Colonic mucosa (tissue), 4 donors: ENCODE measurements at regions of chr2 and their contacts with region 1.

Region 1: DNA sequence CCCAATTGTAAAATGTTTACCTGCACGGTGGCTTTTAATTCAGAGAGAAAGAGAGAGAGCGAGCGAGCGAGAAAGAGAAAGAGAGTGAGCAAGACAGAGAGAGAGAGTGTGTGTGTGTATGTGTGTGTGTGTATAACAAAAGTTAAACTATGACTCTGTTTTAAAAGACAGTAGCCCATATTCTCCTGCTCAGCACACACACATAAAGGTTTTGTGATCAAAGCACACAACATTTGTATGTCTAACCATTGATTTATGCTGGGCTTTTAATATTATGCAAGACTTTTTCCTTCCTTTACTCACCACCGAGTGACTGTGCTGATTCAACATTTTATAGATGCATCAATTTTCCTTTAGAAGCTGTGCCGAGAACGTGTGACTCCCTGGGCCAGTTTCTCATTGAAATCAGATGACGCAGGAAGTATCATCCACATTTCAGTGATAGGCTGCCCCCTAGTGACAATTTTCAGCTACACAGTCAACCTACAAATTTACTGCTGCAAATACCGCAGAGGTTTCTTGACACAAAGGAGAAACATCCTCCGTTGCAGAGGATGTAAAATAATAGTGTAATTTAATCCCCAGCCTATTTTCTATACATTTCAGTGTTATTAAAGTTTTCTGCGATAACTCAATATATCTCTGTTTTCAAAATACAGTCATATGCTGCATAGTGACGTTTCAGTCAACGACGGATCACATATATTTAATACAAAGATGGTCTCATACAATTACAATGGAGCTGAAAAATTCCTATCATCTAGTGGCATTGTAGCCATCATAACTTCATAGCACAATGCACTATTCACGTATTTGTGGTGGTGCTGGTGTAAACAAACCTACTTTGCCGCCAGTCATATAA is 165.9 kb upstream of the TANK start:
- DNase-seq: peak; percentile 81
- H3K4me3 ChIP-seq: no peak overlapping the region
- H3K27ac ChIP-seq: no peak overlapping the region
- H3K4me1 ChIP-seq: no peaks in the 10 kb centered on the region
- H3K27me3 ChIP-seq: no peaks in the 10 kb centered on the region
- CTCF ChIP-seq: peak; percentile 85

Region 2: GRCh38 chr2:160109936-160110673 is 884.3 kb before region 1 on chr2:
- intact Hi-C with region 1: loop called (anchors 5 kb)
- DNase-seq: peak; percentile 75
- H3K4me3 ChIP-seq: no peak overlapping the region
- H3K27ac ChIP-seq: no peak overlapping the region
- H3K4me1 ChIP-seq: no peaks in the 10 kb centered on the region
- H3K27me3 ChIP-seq: no peaks in the 10 kb centered on the region
- CTCF ChIP-seq: peak; percentile 70

Region 3: DNA sequence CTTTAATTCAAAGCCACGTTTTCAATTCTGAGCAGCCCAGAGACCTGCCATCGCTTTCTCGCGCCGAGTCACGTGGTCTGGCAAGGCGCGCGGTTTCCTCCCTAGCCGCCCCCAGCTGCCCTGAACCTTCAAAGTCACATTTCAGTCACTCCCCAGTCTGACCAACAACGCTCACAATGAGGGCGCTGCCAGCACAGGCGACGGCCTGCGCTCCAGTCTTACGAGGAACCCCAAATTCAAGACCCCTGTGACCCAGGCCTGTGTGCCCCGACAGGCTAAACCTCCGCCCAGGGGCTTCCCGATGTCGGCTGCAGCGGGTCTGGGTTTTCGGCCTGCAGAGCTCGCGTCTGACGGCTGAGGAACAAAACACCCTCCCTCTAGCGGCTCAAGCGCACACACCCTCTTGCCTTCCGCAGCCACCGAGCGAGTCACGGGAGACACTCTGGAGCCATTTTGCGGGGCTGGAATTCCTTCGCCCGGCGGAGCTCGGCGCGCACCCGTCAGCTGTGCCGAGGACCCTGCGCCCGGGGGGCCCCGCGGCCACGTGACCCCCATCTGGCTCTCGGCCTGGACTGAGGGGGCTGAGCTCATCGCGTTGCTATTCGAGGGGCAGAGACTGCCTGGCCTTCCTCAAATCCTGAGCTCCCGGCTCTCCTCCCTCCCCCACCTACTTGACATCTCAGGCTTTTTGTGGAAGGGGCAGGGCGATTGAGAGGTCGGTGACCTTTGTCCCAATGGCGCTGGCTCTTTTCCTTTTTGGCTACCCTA is 724.4 kb before region 1 on chr2:
- intact Hi-C with region 1: loop called (anchors 10 kb)
- DNase-seq: peak; percentile 79
- H3K4me3 ChIP-seq: peak overlapping the region; percentile 40
- H3K27ac ChIP-seq: peak overlapping the region; percentile 77
- H3K4me1 ChIP-seq: peaks cover 4% of the 10 kb centered on the region
- H3K27me3 ChIP-seq: no peaks in the 10 kb centered on the region
- CTCF ChIP-seq: peak; percentile 55

Region 4: DNA sequence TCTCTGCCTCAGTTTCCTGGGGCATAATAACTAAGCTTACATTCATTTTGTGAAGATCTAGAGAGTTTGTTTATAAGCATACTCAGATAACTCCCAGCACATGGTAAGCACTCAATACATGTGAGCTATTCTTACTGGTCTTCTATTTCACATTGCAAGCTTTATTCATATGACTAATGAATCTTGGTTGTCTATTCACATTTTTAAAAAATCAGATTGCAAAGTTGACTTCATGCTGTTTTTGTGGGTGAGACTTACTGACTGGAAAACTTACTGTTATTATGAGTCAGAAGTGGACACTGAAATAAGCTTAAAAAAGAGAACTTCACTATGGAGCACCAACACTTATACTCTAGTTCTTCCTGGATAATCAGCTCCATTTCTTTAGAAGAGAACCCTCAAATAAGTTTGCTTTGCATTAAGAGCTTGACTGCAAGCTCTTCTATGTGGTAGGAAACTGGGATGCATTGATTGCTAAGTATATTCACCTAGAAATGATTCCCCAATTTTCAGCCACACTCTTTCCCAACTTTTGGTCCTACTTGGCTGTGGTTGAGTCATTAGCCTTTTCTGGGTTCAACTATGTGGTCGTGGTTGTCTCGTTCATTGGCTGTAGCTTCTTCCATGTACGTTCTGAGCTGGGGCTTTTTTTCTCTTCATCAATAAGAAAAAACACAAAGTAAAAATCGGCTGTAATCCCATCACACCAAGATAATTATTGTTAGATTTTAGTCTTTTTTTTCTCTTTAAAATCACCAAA is 471.2 kb before region 1 on chr2:
- intact Hi-C with region 1: no loop called
- DNase-seq: no peak
- H3K4me3 ChIP-seq: no peak overlapping the region
- H3K27ac ChIP-seq: no peak overlapping the region
- H3K4me1 ChIP-seq: no peaks in the 10 kb centered on the region
- H3K27me3 ChIP-seq: no peaks in the 10 kb centered on the region
- CTCF ChIP-seq: no peak

Region 5: GRCh38 chr2:160918906-160919503 is 75.4 kb before region 1 on chr2:
- intact Hi-C with region 1: no loop called
- DNase-seq: peak; percentile 31
- H3K4me3 ChIP-seq: no peak overlapping the region
- H3K27ac ChIP-seq: no peak overlapping the region
- H3K4me1 ChIP-seq: no peaks in the 10 kb centered on the region
- H3K27me3 ChIP-seq: no peaks in the 10 kb centered on the region
- CTCF ChIP-seq: peak; percentile 40

Region 6: DNA sequence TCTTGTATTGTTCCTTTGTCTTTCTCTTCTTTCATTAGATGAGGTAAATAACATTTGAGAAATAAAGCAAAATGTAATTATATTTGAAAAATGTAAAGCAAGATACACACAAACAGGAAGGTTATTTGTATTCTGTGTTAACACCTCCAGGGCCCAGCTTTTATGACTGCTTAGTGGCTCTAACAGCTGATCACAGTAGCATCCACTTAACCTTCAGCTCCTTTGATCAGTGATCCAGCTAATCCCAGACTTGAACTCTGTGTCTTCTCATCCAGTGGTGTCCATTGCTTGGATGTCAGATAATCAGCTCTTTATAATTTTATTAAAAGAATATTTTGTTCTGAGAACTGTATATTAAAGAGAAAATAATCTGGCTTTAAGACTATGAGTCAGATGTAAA is 358.3 kb after region 1 on chr2:
- intact Hi-C with region 1: no loop called
- DNase-seq: no peak
- H3K4me3 ChIP-seq: no peak overlapping the region
- H3K27ac ChIP-seq: no peak overlapping the region
- H3K4me1 ChIP-seq: peaks cover 4% of the 10 kb centered on the region
- H3K27me3 ChIP-seq: no peaks in the 10 kb centered on the region
- CTCF ChIP-seq: no peak